ENCODE measurements at regions of chr19 and their contacts with region 1.

Region 1: GRCh38 chr19:55653758-55654539 is 886 bp upstream of the U2AF2 start:
- DNase-seq: peak; percentile 99
- H3K4me3 ChIP-seq: peak overlapping the region; percentile 86 to 98 (median 89)
- H3K27ac ChIP-seq: peak overlapping the region; percentile 99
- H3K4me1 ChIP-seq: peaks cover 25% of the 10 kb centered on the region
- H3K27me3 ChIP-seq: no peaks in the 10 kb centered on the region
- CTCF ChIP-seq: peak; percentile 100
- POLR2A ChIP-seq: peak; percentile 79

Region 2: DNA sequence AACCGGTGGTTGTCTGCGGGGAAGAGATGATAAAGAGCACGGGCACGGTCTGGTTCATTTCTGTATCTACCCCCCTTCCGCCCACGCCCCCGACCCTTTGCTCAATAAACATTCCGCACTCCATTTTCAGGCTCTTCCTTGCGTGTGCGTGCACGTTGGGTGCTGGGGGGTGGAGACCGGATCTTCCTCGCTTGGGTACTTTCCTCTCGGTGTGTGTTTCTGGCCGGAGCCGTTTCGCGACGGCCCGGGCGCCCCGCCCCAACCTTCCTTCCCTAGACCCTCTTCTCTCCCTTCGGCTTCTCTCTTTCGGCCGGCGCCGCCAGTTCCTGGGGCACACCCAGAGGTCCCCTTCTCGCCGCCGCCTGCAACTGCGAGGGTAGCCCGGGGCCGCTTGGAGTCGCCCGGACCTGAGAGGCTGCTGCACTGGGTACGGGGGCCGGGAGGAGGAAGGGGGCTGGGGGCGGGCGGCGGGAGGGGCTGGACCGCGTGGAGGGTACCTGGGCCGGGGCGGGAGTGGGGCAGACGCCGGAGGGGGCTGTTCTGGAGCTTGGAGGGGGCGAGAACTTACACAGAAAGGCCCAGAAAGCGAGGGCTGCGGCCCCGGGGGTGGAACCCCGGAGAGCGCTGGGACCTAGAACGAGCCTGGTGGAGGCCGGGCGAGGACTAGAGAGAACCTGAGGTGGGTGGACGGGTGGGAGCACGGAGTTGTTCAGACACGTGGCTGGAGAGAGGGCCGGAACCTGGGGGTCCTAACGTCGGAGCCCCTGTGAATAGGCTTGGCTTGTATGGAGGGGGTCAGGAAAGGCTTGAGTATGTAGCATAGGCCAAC is 10.4 kb before region 1 on chr19 and contains the start of gene ZNF581:
- CTCF ChIA-PET with region 1: interaction called, 7 read pairs
- POLR2A ChIA-PET with region 1: interaction called, 4 read pairs
- dilution Hi-C with region 1: no loop called
- intact Hi-C with region 1: loop called (anchors 1 kb)
- DNase-seq: peak; percentile 68
- H3K4me3 ChIP-seq: peak within 1 kb of the TSS; percentile 60 to 75 (median 61)
- H3K27ac ChIP-seq: no peak within 1 kb of the TSS
- H3K4me1 ChIP-seq: peaks cover 32% of the 10 kb centered on the region
- H3K27me3 ChIP-seq: no peaks in the 10 kb centered on the region
- CTCF ChIP-seq: no peak
- POLR2A ChIP-seq: no peak
- total RNA-seq, gene ZNF581: 27.8 and 31.4 TPM in 2 replicates

Region 3: GRCh38 chr19:55674841-55675660 is 21.1 kb after region 1 on chr19 and contains the start of gene EPN1:
- CTCF ChIA-PET with region 1: interaction called, 22 read pairs
- POLR2A ChIA-PET with region 1: interaction called, 5 read pairs
- dilution Hi-C with region 1: no loop called
- intact Hi-C with region 1: loop called (anchors 1 kb)
- DNase-seq: peak; percentile 93
- H3K4me3 ChIP-seq: peak within 1 kb of the TSS; percentile 17 to 65 (median 63)
- H3K27ac ChIP-seq: peak within 1 kb of the TSS; percentile 68
- H3K4me1 ChIP-seq: peaks cover 44% of the 10 kb centered on the region
- H3K27me3 ChIP-seq: no peaks in the 10 kb centered on the region
- CTCF ChIP-seq: no peak
- POLR2A ChIP-seq: peak; percentile 68
- total RNA-seq, gene EPN1: 133 and 138 TPM in 2 replicates

Measured in endothelial cell of umbilical vein (primary cell).